ENCODE measurements at regions of chr10 and their contacts with region 1.

Region 1: DNA sequence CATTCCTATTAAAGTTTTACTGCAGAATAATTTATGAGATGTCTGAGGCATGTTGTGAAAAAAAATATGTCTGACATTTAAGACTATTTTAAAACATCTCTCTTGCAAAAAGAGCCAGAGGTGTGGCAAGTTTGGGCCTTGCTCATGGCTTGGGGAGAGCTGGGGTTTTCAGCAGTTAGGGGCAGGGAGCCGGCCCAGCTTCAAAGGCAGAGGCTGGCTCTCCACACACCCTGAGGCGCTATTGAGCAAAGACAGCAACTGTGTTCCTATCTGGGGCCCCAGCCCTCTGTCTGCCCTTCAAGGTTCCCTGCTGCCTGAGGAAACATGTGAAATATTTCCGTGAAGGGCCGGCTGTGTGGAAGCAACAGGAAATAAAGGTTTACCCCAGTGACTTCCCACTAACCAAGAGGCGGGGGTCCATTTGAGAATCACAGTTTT is 94.0 kb downstream of the SORBS1 start:
- DNase-seq: no peak
- ATAC-seq: peak; percentile 80
- H3K4me3 ChIP-seq: no peak overlapping the region
- H3K27ac ChIP-seq: peak overlapping the region; percentile 44; the same call in 1 of the 2 replicates
- H3K4me1 ChIP-seq: peaks cover 37% of the 10 kb centered on the region
- H3K27me3 ChIP-seq: no peaks in the 10 kb centered on the region
- CTCF ChIP-seq: no peak

Region 2: GRCh38 chr10:95188593-95188992 is 278.6 kb before region 1 on chr10:
- CTCF ChIA-PET with region 1: interaction called, 16 read pairs
- POLR2A ChIA-PET with region 1: no interaction called
- in situ Hi-C with region 1: no loop called
- intact Hi-C with region 1: no loop called
- DNase-seq: no peak
- ATAC-seq: no peak
- H3K4me3 ChIP-seq: no peak overlapping the region
- H3K27ac ChIP-seq: no peak overlapping the region
- H3K4me1 ChIP-seq: no peaks in the 10 kb centered on the region
- H3K27me3 ChIP-seq: no peaks in the 10 kb centered on the region
- CTCF ChIP-seq: no peak

Measured in Panc1 (cell line).